Activated T-helper 2 cell treated with anti-CD3 and anti-CD28 coated beads, Interferon-gamma antibody, Interleukin-2, Interleukin-4, amounts not matched to agents 10 μg/mL and 5 μg/mL and 100 μg/mL, durations not matched to agents 14 hours and 24 hours and 36 hours (primary cell): ENCODE measurements at regions of chr10 and their contacts with region 1.

Region 1: DNA sequence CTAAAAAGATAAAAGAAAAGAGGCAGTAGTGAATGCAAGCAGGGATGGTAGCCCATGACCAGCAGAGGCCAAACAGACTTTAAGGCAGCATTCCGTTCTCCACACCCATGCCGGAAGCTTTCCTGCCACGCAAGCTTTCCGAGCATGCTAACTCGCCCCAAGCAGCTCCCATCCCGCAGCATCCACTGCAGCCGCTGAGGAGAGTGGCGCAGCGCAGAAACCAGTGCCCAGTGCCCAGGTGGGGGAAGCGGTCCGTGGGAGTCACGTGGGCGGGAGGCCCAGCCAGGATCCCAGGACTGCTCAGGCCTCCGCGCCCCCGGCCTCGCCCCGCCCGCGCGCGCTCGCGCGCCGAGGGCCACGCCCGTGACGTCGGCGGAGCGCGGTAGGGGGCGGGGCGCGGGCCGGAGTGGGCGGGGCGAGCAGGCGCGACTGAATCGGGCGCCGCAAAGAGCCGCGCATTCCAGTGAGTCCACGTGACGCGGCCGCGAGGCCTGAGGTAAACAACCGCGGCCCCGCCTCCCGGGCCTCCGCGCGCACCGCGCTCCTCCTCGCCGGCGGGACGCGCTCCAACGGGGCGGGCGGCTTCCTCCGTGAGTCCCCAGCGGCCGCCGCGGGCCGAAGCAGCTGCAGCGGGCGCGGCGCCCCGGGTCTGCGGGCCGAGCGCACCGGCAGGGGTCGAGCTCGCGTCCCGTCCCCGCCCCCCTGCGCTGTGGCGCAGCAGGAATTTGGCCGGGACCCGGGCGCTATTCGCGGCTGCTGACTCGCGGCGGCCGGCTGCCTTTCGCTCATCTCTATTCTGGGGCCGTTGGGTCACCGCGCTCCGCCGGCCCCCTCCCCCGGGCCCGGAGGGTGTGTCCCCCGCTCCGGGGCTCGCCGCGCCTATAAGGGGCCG is at the start of gene OTUD1:
- DNase-seq: peak; percentile 92
- H3K4me3 Mint-ChIP-seq: peak within 1 kb of the TSS; percentile 76
- H3K27ac Mint-ChIP-seq: peak within 1 kb of the TSS; percentile 58
- H3K4me1 Mint-ChIP-seq: peaks cover 33% of the 10 kb centered on the region
- H3K27me3 Mint-ChIP-seq: peaks cover 3% of the 10 kb centered on the region
- total RNA-seq, gene OTUD1: 9.7 and 10.2 TPM in 2 replicates

Region 2: DNA sequence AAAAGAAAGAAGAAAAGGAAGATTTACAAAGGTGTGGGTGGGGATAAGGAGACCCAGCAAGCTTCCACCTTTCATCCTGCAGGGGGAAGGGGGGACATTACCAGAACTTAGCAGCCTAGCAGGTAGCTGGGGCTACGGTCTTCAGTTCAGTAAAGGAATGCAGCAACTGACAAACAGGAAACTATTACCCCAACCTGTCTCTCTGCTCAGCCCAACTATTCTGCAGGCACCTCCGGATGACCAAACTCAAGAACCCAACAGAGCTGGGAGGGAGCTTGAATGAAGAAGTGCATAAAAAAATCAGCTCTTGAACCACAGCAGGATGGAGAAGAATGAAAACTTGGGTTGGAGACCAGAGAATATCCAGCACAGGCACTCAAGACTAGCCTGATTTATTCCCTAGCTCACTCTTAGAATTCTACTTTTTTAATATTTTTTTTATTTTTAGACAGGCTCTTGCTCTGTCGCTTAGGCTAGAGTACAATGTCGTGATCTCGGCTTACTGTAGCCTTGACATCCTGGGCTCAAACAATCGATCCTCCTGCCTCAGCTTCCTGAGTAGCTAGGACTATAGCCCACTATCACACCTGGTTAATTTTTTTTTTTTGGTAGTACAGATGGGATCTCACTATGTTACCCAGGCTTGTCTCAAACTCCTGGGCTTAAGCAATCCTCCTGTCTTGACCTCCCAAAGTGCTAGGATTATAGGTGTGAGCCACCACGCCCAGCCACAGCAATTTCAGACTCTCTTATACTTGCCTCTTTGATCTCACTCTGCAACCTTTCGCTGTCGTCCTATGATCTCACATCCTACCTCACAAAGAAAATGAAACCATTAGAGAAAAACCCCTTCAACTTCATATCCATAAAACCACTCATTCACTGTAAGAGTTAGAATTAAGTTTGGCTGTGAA is 75.7 kb before region 1 on chr10:
- intact Hi-C with region 1: loop called (anchors 2 kb)
- DNase-seq: peak; percentile 24
- H3K4me3 Mint-ChIP-seq: peak overlapping the region; percentile 71
- H3K27ac Mint-ChIP-seq: peak overlapping the region; percentile 90
- H3K4me1 Mint-ChIP-seq: peaks cover 47% of the 10 kb centered on the region
- H3K27me3 Mint-ChIP-seq: no peaks in the 10 kb centered on the region

Region 3: DNA sequence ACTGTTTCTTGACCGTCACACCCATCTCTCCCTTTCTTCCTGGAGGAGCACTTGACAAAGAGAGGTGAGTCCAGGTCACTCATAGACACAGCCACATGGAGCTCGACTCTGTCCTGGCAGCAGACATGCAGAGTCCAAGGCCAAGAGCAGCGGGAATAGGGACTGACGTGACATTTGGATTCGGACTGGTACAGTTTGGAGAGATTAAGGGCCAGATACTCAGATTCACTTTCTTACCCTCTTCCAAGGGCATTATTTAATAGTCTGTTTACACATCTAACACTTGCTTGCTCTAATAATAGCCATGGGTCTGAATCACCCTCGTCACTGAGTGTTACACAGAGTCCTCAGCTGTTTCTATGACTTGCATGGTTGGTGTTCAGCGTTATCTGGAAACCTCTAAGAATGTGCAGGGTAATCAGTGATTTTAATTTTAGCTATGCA is 39.1 kb before region 1 on chr10:
- intact Hi-C with region 1: loop called (anchors 10 kb)
- DNase-seq: no peak
- H3K4me3 Mint-ChIP-seq: no peak overlapping the region
- H3K27ac Mint-ChIP-seq: no peak overlapping the region
- H3K4me1 Mint-ChIP-seq: no peaks in the 10 kb centered on the region
- H3K27me3 Mint-ChIP-seq: no peaks in the 10 kb centered on the region

Region 4: DNA sequence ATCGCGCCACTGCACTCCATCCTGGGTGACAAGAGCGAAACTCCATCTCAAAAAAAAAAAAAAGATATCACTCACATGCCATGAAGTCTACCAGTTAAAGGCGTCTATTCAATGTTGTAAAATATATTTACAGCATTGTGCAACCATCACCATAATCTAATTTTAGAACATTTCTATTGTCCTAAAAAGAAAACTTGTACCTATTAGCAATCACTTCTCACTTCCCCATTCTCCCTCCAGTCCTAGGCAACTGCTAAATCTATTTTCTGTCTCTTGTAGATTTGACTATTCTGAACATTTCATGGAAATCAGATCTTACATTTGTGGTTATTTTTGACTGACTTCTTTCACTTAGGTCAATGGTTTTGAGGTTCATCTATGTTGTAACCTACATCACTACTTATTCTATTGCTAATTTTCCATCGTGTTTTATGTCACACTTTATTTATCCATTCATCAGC is 25.1 kb before region 1 on chr10:
- intact Hi-C with region 1: loop called (anchors 2 kb)
- DNase-seq: no peak
- H3K4me3 Mint-ChIP-seq: no peak overlapping the region
- H3K27ac Mint-ChIP-seq: peak overlapping the region; percentile 56
- H3K4me1 Mint-ChIP-seq: peaks cover 20% of the 10 kb centered on the region
- H3K27me3 Mint-ChIP-seq: no peaks in the 10 kb centered on the region

Region 5: DNA sequence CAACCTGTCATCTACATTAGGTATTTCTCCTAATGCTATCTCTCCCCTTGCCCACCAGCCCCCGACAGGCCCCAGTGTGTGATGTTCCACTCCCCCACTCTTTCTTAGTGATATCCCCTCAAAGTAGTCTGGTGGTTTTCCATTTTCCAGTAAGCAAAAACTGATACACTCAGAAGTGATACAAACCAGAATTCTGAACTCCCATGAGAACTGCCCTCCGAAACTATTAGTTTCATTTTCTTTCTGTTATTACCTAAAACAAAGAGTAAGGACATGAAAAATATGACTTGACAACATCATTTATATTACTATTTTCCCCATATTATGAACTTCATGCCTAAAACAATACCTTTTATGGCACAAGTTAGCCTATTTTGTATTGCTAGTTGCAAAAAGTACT is 175.1 kb after region 1 on chr10:
- intact Hi-C with region 1: no loop called
- DNase-seq: no peak
- H3K4me3 Mint-ChIP-seq: no peak overlapping the region
- H3K27ac Mint-ChIP-seq: no peak overlapping the region
- H3K4me1 Mint-ChIP-seq: no peaks in the 10 kb centered on the region
- H3K27me3 Mint-ChIP-seq: no peaks in the 10 kb centered on the region